ENCODE measurements at regions of chr2 and their contacts with region 1.

Region 1: DNA sequence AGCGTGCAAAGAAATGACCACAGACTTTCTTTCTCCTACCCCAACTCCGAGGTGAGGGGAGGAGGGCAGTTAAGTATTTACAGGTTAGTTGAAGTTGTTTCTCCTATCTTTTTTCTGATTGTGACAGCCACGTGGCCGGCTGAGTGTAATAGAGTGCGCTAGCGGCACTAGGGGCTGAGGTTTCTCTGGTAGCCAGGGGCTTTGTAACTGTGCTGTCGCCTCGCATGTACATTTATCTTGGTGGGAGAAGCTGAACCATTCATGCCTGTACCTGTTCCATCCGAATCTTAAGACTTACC is 214.1 kb upstream of the STON1 start:
- DNase-seq: peak in 10 of 14 experiments; percentile 6 to 74 (median 26)
- ATAC-seq: no peak
- H3K4me3 ChIP-seq: peak overlapping the region; percentile 93
- H3K4me3 Mint-ChIP-seq: peak overlapping the region; percentile 97
- H3K27ac ChIP-seq: peak overlapping the region; percentile 95 to 96
- H3K27ac Mint-ChIP-seq: peak overlapping the region; percentile 89
- H3K4me1 ChIP-seq: peaks cover 40% of the 10 kb centered on the region
- H3K4me1 Mint-ChIP-seq: peaks cover 56% of the 10 kb centered on the region
- H3K27me3 ChIP-seq: no peaks in the 10 kb centered on the region
- H3K27me3 Mint-ChIP-seq: no peaks in the 10 kb centered on the region
- CTCF ChIP-seq: no peak

Region 2: GRCh38 chr2:48339451-48339850 is 23.6 kb after region 1 on chr2:
- CTCF ChIA-PET with region 1: interaction called, 3 read pairs
- POLR2A ChIA-PET with region 1: no interaction called
- intact Hi-C with region 1: loop called in 1 of 2 experiments (anchors 2 kb)
- DNase-seq: no peak
- ATAC-seq: no peak
- H3K4me3 ChIP-seq: no peak overlapping the region
- H3K4me3 Mint-ChIP-seq: no peak overlapping the region
- H3K27ac ChIP-seq: no peak overlapping the region
- H3K27ac Mint-ChIP-seq: peak overlapping the region; percentile 43
- H3K4me1 ChIP-seq: peaks cover 18% of the 10 kb centered on the region
- H3K4me1 Mint-ChIP-seq: peaks cover 54% of the 10 kb centered on the region
- H3K27me3 ChIP-seq: no peaks in the 10 kb centered on the region
- H3K27me3 Mint-ChIP-seq: no peaks in the 10 kb centered on the region
- CTCF ChIP-seq: no peak

Region 3: DNA sequence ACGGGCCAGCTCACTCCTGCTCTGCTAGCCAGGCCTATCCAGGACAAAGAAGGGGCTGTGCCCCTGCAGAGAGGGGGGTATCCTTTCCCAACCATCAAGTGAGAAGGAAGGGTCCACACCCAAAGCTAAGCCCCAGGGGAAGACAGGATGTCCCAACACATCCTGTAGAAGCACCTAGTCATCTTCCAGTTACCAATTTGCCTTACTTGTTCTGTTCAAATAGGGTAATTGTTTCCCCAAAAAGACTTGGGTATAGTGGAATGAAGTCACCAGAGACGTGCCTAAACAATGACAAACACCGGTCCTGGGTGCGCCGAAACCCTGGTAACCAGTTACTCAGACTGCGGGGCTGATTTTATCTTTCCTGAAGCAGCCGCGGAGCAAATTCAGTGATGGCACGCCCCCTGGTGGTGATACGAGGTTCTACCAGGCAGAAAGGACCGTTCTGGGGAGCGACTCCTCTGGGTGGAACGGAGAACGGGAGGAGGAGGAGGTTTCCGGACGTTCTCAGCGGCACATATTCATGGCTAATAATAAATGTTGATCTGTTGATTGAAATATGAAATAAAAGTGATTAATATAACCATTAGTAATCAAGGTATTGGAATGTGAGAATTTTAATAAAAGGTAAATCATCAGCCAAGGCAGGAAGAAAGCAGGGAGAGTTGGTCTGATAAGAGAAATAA is 104.8 kb after region 1 on chr2:
- CTCF ChIA-PET with region 1: no interaction called
- POLR2A ChIA-PET with region 1: no interaction called
- intact Hi-C with region 1: loop called in 1 of 2 experiments (anchors 2 kb)
- DNase-seq: peak; percentile 88 to 97 (median 91)
- ATAC-seq: peak; percentile 90
- H3K4me3 ChIP-seq: no peak overlapping the region
- H3K4me3 Mint-ChIP-seq: peak overlapping the region; percentile 11
- H3K27ac ChIP-seq: no peak overlapping the region
- H3K27ac Mint-ChIP-seq: peak overlapping the region; percentile 60
- H3K4me1 ChIP-seq: peaks cover 24% of the 10 kb centered on the region
- H3K4me1 Mint-ChIP-seq: peaks cover 31% of the 10 kb centered on the region
- H3K27me3 ChIP-seq: no peaks in the 10 kb centered on the region
- H3K27me3 Mint-ChIP-seq: peaks cover 10% of the 10 kb centered on the region
- CTCF ChIP-seq: peak; percentile 96